Dendritic cell treated with granulocyte-macrophage colony-stimulating factor and Interleukin-4, amounts not matched to agents 40 ng/mL and 50 ng/mL, for 4 days (primary cell): ENCODE measurements at regions of chr3 and their contacts with region 1.

Region 1: GRCh38 chr3:138412821-138413551 is 21.4 kb upstream of the ESYT3 start:
- H3K4me3 Mint-ChIP-seq: peak overlapping the region; percentile 44
- H3K27ac Mint-ChIP-seq: peak overlapping the region; percentile 98
- H3K4me1 Mint-ChIP-seq: peaks cover 82% of the 10 kb centered on the region
- H3K27me3 Mint-ChIP-seq: peaks cover 4% of the 10 kb centered on the region

Region 2: DNA sequence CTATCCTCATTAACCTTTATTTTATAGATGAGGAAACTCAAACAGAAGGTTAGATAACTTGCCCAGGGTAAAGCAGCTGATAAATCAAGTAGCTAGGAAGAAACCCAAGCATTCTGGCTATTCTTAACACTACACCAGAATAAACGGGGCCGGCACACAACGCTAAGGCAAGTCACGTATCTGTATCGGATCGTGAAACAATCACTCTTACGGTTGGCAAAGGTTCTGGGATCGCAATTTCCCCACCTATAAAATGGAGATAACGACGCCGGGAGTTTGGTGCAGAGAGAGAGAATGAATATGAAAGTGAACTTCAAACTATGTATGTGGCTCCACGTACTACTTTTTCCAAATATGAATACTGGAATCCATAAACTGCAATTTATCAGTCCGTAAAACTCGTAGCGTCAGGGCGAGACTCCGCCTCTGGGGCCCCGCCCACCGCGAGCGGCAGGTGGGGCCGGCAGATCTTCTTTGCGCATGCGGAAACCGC is 226.1 kb before region 1 on chr3:
- intact Hi-C with region 1: no loop called
- H3K4me3 Mint-ChIP-seq: peak overlapping the region; percentile 94
- H3K27ac Mint-ChIP-seq: peak overlapping the region; percentile 97
- H3K4me1 Mint-ChIP-seq: peaks cover 36% of the 10 kb centered on the region
- H3K27me3 Mint-ChIP-seq: peaks cover 7% of the 10 kb centered on the region

Region 3: DNA sequence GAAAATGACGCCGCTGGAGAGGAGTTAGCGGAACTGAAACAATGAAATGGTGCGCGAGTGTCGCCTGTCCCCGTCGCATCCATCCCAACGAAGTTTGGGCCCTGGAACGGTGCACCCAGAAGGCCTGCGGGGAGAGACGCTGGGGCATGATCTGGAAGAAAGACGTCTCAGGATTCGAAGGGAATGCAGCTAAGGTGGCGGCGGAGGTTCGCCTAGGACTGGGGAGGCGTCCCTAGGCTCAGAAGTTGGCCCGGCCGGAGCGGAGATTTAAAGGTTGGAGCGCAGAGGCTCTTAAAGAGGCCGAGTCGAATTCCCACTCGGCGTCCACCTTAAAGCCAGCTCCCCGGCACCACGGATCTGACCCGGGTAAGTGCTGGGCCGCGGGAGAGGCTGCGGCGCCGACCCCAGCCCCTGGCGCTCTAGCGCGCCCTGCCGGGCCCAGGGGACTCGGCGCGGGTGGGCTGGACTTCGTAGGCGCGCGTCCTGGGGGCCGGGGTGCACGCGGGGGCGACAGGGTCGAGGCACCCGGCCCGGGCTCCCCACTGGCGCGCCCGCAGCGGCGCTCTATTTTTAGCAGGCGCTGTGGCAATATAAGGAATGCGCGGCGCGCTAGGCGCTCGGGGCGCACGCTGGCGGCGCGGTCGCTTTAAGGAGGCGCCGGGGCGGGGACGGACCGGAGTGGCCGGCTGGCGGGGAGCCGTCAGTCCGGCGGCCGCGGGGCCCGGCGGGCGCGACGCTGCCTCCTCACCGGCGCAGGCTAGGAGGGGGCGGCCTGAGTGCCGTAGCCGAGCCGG is 64.8 kb before region 1 on chr3 and contains the start of gene MRAS:
- intact Hi-C with region 1: loop called (anchors 2 kb)
- H3K4me3 Mint-ChIP-seq: peak within 1 kb of the TSS; percentile 100
- H3K27ac Mint-ChIP-seq: peak within 1 kb of the TSS; percentile 99
- H3K4me1 Mint-ChIP-seq: peaks cover 46% of the 10 kb centered on the region
- H3K27me3 Mint-ChIP-seq: peaks cover 7% of the 10 kb centered on the region

Region 4: DNA sequence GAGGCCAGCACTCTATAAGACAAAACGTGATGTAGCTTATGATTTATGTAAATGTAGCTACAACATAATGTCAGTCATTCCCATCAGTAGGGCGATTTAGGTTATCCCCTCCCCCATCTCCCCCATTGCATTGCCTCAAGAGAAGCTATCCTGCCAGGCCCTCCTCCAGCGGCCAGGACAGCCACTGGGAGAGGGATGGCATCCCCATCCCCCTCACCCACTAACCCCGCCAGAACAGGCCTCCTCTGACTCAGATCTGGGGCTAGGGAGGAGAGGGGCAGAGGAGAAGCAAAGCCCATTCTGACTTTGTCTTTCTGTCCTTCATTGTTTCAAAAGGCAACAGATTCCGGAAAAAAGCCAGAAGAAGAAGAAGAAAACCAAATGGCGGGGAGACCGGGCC is 11.2 kb before region 1 on chr3:
- intact Hi-C with region 1: loop called (anchors 1 kb)
- H3K4me3 Mint-ChIP-seq: no peak overlapping the region
- H3K27ac Mint-ChIP-seq: no peak overlapping the region
- H3K4me1 Mint-ChIP-seq: peaks cover 15% of the 10 kb centered on the region
- H3K27me3 Mint-ChIP-seq: no peaks in the 10 kb centered on the region

Region 5: GRCh38 chr3:139611528-139611927 is 1198.5 kb after region 1 on chr3:
- intact Hi-C with region 1: no loop called
- H3K4me3 Mint-ChIP-seq: no peak overlapping the region
- H3K27ac Mint-ChIP-seq: no peak overlapping the region
- H3K4me1 Mint-ChIP-seq: no peaks in the 10 kb centered on the region
- H3K27me3 Mint-ChIP-seq: no peaks in the 10 kb centered on the region